ENCODE measurements at regions of chr2 and their contacts with region 1.

Region 1: DNA sequence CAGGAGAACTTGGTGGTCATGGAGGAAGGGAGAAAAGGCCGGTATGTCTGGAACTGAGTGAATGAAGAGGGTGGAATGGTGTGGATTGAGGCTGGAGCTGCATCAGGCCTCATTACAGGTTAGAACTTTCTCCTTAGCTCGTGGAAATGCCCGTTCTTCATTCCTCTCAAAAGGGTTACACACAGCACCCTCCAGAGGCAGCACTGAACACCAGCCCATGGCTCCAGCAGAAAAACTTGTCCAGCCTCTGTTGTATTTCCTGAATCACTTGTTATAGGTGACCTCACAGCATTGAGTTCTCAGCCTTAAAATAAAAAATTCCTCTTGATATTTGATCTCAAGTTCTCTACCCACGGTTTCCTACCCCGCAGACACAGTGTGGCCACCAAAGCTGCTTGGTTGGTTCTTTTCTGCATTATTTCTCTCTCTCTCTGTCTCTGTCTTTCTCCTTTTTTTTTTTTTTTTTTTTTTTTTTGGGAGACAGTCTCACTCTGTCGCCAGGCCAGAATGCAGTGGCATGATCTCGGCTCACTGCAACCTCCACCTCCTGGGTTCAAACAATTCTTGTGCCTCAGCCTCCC is 89.6 kb downstream of the ITGB1BP1 start:
- DNase-seq: peak; percentile 41 to 62
- ATAC-seq: peak; percentile 75 to 94 (median 86)
- H3K4me3 ChIP-seq: no peak overlapping the region
- H3K27ac ChIP-seq: no peak overlapping the region
- H3K4me1 ChIP-seq: peaks cover 3% of the 10 kb centered on the region
- H3K27me3 ChIP-seq: no peaks in the 10 kb centered on the region
- CTCF ChIP-seq: peak; percentile 71

Region 2: GRCh38 chr2:8872821-8873432 is 460.8 kb before region 1 on chr2:
- intact Hi-C with region 1: loop called in 1 of 2 experiments (anchors 10 kb)
- DNase-seq: no peak
- ATAC-seq: peak in 2 of 4 donors; percentile 41 to 60
- H3K4me3 ChIP-seq: no peak overlapping the region
- H3K27ac ChIP-seq: no peak overlapping the region
- H3K4me1 ChIP-seq: no peaks in the 10 kb centered on the region
- H3K27me3 ChIP-seq: no peaks in the 10 kb centered on the region
- CTCF ChIP-seq: peak; percentile 65

Region 3: GRCh38 chr2:9003616-9004337 is 329.9 kb before region 1 on chr2 and contains the start of gene MBOAT2:
- intact Hi-C with region 1: no loop called
- DNase-seq: peak; percentile 83 to 88
- ATAC-seq: peak; percentile 94 to 98 (median 96)
- H3K4me3 ChIP-seq: peak within 1 kb of the TSS; percentile 73
- H3K27ac ChIP-seq: peak within 1 kb of the TSS; percentile 31
- H3K4me1 ChIP-seq: no peaks in the 10 kb centered on the region
- H3K27me3 ChIP-seq: no peaks in the 10 kb centered on the region
- CTCF ChIP-seq: no peak
- total RNA-seq, gene MBOAT2: 0.76 to 3.5 (median 2.3) TPM

Region 4: GRCh38 chr2:9021563-9022211 is 312.0 kb before region 1 on chr2:
- intact Hi-C with region 1: no loop called
- DNase-seq: no peak
- ATAC-seq: no peak
- H3K4me3 ChIP-seq: no peak overlapping the region
- H3K27ac ChIP-seq: no peak overlapping the region
- H3K4me1 ChIP-seq: no peaks in the 10 kb centered on the region
- H3K27me3 ChIP-seq: peaks cover 0 to 2% (median 0%) of the 10 kb centered on the region in 3 donors
- CTCF ChIP-seq: no peak

Region 5: GRCh38 chr2:9205963-9206948 is 127.4 kb before region 1 on chr2 and contains the start of gene ASAP2:
- intact Hi-C with region 1: loop called (anchors 2 to 5 kb)
- DNase-seq: peak; percentile 80 to 86
- ATAC-seq: peak; percentile 73 to 88 (median 87)
- H3K4me3 ChIP-seq: peak within 1 kb of the TSS; percentile 79
- H3K27ac ChIP-seq: peak within 1 kb of the TSS; percentile 65
- H3K4me1 ChIP-seq: no peaks in the 10 kb centered on the region
- H3K27me3 ChIP-seq: peaks cover 0 to 18% (median 0%) of the 10 kb centered on the region in 3 donors
- CTCF ChIP-seq: peak; percentile 73
- total RNA-seq, gene ASAP2: 2.5 to 9.0 (median 4.1) TPM

Region 6: GRCh38 chr2:9373077-9373875 is 39.6 kb after region 1 on chr2:
- intact Hi-C with region 1: no loop called
- DNase-seq: no peak
- ATAC-seq: no peak
- H3K4me3 ChIP-seq: no peak overlapping the region
- H3K27ac ChIP-seq: no peak overlapping the region
- H3K4me1 ChIP-seq: no peaks in the 10 kb centered on the region
- H3K27me3 ChIP-seq: no peaks in the 10 kb centered on the region
- CTCF ChIP-seq: no peak